ENCODE measurements at regions of chr6 and their contacts with region 1.

Region 1: DNA sequence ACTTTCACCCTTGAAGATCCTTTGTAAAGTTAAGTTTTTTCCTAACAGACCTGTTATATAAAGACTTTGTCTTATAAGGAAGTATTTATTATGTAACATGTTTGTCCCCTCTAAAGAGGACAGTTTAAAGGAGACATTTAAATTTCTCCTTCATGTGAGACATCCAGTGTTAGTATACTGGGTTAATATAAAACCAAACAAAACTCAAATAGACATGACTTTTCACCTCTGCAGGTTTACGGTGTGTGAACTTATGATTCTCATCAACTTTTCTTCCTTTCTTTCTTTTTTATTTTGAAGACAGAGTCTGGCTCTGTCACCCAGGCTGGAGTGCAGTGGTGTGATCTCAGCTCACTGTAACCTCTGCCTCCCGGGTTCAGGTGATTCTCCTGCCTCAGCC is 17.4 kb upstream of the MPC1 start:
- DNase-seq: no peak
- H3K27ac ChIP-seq: no peak overlapping the region
- CTCF ChIP-seq: no peak

Region 2: GRCh38 chr6:166275714-166276166 is 124.4 kb before region 1 on chr6:
- CTCF ChIA-PET with region 1: interaction called, 11 read pairs
- POLR2A ChIA-PET with region 1: no interaction called
- DNase-seq: peak; percentile 62
- H3K27ac ChIP-seq: no peak overlapping the region
- CTCF ChIP-seq: peak; percentile 98

Measured in RWPE1 (cell line).